ENCODE measurements at regions of chr9 and their contacts with region 1.

Region 1: GRCh38 chr9:25648116-25648515 is 30.1 kb downstream of the TUSC1 start:
- DNase-seq: no peak
- ATAC-seq: no peak
- H3K4me3 Mint-ChIP-seq: no peak overlapping the region
- H3K27ac Mint-ChIP-seq: no peak overlapping the region
- H3K4me1 Mint-ChIP-seq: no peaks in the 10 kb centered on the region
- H3K27me3 Mint-ChIP-seq: no peaks in the 10 kb centered on the region
- CTCF ChIP-seq: no peak

Region 2: DNA sequence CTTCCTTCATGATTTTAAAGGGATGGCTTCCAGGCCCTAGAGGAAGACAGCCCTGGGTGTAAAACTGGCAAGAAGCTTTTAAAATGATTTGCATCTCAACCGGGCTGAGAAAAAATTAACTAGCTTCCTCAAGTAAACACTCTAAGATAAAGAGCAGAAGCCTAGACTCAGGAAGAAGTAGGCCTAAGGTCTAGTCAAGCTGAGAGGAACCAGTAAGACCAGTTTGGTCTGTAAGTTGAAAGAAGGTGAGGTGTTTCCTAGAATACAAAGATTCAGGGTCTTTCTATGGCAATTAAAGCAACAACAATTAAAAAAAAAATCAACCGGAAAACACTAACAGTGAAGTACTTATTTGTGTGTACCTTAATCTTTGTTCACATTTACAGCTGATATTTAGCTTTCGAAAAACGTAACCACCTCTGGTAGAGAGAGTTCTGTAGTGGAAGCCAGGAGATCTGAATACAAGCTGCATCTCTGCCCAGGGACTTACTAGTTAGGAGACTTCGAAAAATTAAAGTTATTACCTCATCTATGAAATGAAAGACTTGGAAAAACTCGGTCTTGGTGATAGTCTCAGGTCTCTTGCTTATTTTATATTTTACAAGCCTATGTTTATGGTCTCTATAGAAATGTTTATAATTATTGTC is 45.6 kb before region 1 on chr9:
- CTCF ChIA-PET with region 1: no interaction called
- POLR2A ChIA-PET with region 1: no interaction called
- intact Hi-C with region 1: loop called (anchors 5 kb)
- DNase-seq: no peak
- ATAC-seq: no peak
- H3K4me3 Mint-ChIP-seq: no peak overlapping the region
- H3K27ac Mint-ChIP-seq: no peak overlapping the region
- H3K4me1 Mint-ChIP-seq: no peaks in the 10 kb centered on the region
- H3K27me3 Mint-ChIP-seq: no peaks in the 10 kb centered on the region
- CTCF ChIP-seq: no peak

Measured in activated B cell treated with CpG ODN at 0.5 μM for 24 hours (primary cell).